ENCODE measurements at regions of chr13 and their contacts with region 1.

Region 1: DNA sequence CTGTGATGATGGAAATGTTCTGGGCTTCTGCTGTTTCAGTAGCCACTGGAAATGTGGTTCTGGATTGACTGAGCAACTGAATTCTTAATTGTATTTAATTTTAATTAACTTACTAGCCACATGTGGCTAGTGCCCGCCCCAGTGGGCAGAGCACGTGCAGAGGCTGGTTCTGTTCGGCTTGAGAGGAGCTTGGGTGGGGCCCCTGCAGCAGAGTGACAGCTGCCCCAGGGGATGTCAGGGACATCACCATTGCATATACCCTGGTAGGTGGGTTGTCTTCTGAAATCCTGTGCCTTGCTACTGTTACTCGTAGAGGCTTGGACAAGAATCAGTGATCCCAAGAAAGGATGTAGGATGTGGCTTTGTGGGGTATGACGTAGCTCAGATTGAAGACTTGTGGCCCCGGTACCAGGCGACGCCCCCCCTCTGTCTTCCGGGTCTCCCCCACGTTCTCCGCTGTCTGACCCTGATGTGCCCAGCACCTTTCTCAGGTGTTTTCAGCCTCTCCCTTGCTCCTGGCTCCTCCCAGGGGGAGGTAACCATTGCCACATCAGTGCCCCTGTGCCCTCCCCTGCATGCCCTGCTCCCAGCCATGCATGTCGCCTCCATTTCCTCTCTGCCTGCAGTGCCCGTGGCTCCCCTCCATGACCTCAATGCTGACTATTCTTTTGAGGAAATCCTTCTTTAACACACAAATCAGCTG is 102.6 kb upstream of the RNF113B start:
- DNase-seq: no peak
- H3K4me3 ChIP-seq: no peak overlapping the region
- H3K27ac ChIP-seq: peak overlapping the region; percentile 72
- H3K4me1 ChIP-seq: peaks cover 50% of the 10 kb centered on the region
- H3K27me3 ChIP-seq: no peaks in the 10 kb centered on the region
- CTCF ChIP-seq: no peak

Region 2: DNA sequence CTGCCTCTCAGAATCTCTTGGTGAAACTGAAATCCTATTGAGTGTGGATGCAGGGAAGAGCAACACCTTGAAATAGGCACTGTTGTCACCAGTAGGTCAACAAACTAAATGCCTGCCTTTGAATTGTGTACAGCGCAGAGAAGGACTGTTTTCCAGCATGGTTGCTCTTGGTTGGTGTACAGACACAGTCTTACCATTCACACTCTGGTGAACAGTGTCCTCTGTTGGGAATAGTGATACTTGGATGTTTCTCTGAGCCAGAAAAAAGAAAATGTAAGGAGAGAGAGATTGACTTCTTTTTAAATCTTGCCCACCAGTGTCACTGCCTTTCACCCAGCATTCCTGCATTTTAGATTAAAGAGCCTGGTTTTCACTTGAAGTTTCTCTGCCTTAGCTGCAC is 117.6 kb after region 1 on chr13:
- CTCF ChIA-PET with region 1: no interaction called
- POLR2A ChIA-PET with region 1: interaction called, 15 read pairs
- intact Hi-C with region 1: no loop called
- DNase-seq: peak; percentile 42
- H3K4me3 ChIP-seq: no peak overlapping the region
- H3K27ac ChIP-seq: no peak overlapping the region
- H3K4me1 ChIP-seq: peaks cover 25% of the 10 kb centered on the region
- H3K27me3 ChIP-seq: no peaks in the 10 kb centered on the region
- CTCF ChIP-seq: peak; percentile 49

Measured in A673 (cell line).